K562 (cell line): ENCODE measurements at regions of chr15 and their contacts with region 1.

Region 1: GRCh38 chr15:90286678-90287077 is 21.2 kb downstream of the NGRN start:
- DNase-seq: peak in 2 of 4 experiments; percentile 45 to 55
- ATAC-seq: peak; percentile 92
- H3K4me3 ChIP-seq: no peak overlapping the region
- H3K27ac ChIP-seq: no peak overlapping the region
- H3K4me1 ChIP-seq: peaks cover 2 to 3% of the 10 kb centered on the region in 2 experiments; a peak in 3 of 5 replicates
- H3K27me3 ChIP-seq: no peaks in the 10 kb centered on the region
- CTCF ChIP-seq: peak; percentile 68 to 91 (median 68)
- EP300 ChIP-seq: no peak
- POLR2A ChIP-seq: no peak
- RAD21 ChIP-seq: peak; percentile 88 to 89

Region 2: DNA sequence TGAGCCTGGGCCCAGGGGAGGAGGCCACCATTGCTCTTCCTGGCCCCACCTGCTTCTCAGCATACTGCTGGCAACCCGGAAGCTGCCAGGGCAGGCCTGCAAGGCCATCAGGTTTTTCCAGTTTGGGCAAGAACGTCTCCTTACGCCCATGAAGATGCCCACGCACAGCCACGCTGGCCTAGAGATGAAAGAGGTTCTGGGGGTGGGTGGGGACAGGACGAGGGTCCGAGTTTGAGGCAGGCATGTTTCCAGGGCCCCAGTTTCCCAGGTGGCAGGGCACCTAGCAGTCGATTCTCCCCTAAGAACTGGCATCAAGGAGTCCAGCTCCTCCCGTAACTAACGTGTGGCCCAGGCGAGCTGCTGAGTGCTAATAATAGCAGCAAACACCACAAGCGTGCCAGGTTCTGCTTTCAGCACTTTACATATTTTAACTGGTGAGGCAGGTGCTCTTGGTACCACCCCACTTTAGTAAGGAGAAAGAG is 239.7 kb before region 1 on chr15:
- CTCF ChIA-PET with region 1: no interaction called
- POLR2A ChIA-PET with region 1: no interaction called
- in situ Hi-C with region 1: no loop called
- intact Hi-C with region 1: no loop called
- DNase-seq: no peak
- ATAC-seq: no peak
- H3K4me3 ChIP-seq: no peak overlapping the region
- H3K27ac ChIP-seq: no peak overlapping the region
- H3K4me1 ChIP-seq: peaks cover 11 to 36% of the 10 kb centered on the region in 2 experiments; a peak in 4 of 5 replicates
- H3K27me3 ChIP-seq: no peaks in the 10 kb centered on the region
- CTCF ChIP-seq: no peak
- EP300 ChIP-seq: no peak
- POLR2A ChIP-seq: no peak
- RAD21 ChIP-seq: no peak

Region 3: DNA sequence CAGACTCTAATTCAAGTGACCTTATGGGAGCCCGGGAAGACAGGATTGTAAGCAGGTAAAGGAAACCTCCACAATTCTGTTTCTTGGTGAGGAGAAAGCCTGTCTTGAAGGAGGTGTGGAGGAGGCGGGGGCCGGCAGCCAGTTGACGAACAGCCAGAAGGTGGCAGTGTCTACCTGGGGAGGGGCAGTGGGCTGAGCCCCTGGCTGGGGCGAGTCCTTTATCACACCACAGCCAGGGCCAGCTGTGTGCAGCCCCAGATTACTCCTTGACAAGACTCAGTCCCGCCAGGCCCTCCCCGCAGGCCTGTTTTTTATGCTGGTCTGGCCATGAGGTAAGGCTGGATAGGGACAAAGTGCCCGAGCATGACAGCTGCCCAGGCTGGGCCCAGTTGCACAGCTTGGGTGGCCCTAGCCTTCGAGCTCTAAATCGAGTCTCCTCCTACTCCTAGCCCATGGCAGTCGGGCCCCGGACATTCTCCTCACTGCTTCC is 143.5 kb before region 1 on chr15:
- CTCF ChIA-PET with region 1: interaction called, 8 read pairs
- POLR2A ChIA-PET with region 1: no interaction called
- in situ Hi-C with region 1: no loop called
- intact Hi-C with region 1: loop called (anchors 1 kb)
- DNase-seq: peak; percentile 96 to 98 (median 97)
- ATAC-seq: peak; percentile 98
- H3K4me3 ChIP-seq: no peak overlapping the region
- H3K27ac ChIP-seq: peak overlapping the region; percentile 83
- H3K4me1 ChIP-seq: peaks cover 28 to 35% of the 10 kb centered on the region in 2 experiments
- H3K27me3 ChIP-seq: no peaks in the 10 kb centered on the region
- CTCF ChIP-seq: peak; percentile 94 to 97 (median 97)
- EP300 ChIP-seq: peak; percentile 89
- POLR2A ChIP-seq: no peak
- RAD21 ChIP-seq: peak; percentile 98

Region 4: DNA sequence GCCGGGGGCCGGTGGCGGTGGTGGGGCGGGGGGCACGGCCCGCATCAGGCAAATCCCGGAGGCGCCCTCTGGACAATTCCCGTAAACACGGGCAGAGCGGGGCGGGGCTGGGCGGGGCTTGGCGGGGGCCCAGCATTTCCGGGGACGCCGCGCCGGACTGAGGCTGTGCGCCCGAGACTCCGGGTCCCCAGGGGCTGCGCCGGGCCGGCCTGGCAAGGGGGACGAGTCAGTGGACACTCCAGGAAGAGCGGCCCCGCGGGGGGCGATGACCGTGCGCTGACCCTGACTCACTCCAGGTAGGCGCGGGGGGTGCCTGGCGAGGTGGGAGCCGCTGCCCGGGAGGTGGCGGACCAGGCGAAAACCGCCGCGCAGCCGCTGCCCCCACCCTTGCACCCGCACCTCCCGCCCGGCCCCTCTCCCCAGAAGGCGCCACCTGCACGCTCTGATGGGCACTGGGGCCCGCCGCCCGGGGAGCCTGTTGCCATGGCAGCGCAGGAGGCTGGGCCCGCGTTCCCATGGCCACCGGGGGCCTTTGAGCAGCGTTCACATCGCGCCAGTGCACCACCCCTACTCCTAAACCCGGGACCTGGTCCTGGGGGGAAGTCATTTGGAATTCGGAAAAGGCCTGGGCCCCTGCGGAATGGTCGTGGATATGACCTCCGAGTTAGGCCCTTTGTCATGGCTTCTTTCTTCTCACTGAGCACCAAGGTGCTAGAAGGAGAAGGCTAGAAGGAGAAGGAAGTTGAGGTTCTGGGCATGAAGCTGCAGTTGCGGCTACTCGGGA is 101.7 kb before region 1 on chr15:
- CTCF ChIA-PET with region 1: no interaction called
- POLR2A ChIA-PET with region 1: no interaction called
- in situ Hi-C with region 1: no loop called
- intact Hi-C with region 1: no loop called
- DNase-seq: peak; percentile 84 to 90 (median 88)
- ATAC-seq: peak; percentile 83
- H3K4me3 ChIP-seq: peak overlapping the region; percentile 77
- H3K27ac ChIP-seq: peak overlapping the region; percentile 97
- H3K4me1 ChIP-seq: peaks cover 42 to 43% of the 10 kb centered on the region in 2 experiments
- H3K27me3 ChIP-seq: no peaks in the 10 kb centered on the region
- CTCF ChIP-seq: peak in 2 of 3 experiments; percentile 2 to 8; a peak in 1 of 6 replicates
- EP300 ChIP-seq: no peak
- POLR2A ChIP-seq: no peak
- RAD21 ChIP-seq: no peak